Activated CD4-positive, alpha-beta T cell treated with anti-CD3 and anti-CD28 coated beads for 36 hours (primary cell): ENCODE measurements at regions of chr4 and their contacts with region 1.

Region 1: DNA sequence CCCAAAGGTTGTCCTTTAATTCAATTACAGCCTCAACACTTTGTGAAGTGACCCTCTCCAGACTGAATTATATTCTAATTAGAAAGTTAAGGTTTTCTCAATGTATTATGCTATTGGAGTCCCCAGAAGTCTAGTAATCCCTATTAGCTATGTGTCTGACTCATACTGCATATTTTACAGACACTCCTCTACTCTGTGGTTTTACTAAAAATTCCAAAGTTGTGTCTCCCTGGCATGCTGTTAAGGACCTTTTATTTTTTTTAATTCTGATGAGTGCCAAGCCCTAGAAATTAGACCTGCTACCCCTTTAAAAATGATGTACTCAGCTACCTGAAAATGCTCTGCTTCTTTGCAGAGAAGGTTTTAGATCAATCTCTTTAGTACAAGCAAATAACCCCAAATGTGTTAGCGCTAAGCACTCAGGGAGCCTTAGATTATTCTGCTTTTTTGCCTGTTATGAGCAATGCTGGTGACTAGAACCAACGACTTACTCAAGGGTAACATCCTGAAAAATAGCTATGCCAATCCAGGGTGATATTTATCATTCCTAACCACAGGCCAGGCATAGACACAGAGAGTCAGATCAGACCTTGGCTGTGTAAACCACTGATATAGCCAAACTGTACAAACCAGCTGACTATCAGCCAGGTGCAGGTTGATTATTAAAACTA is 26.1 kb upstream of the CXCL13 start:
- DNase-seq: no peak
- ATAC-seq: peak; percentile 63
- H3K4me3 Mint-ChIP-seq: no peak overlapping the region
- H3K27ac Mint-ChIP-seq: peak overlapping the region; percentile 70
- H3K4me1 Mint-ChIP-seq: peaks cover 39% of the 10 kb centered on the region
- H3K27me3 Mint-ChIP-seq: peaks cover 17% of the 10 kb centered on the region

Region 2: GRCh38 chr4:77538560-77539157 is 40.9 kb before region 1 on chr4:
- CTCF ChIA-PET with region 1: no interaction called
- POLR2A ChIA-PET with region 1: no interaction called
- intact Hi-C with region 1: loop called in 1 of 2 experiments (anchors 1 kb)
- DNase-seq: peak; percentile 26
- ATAC-seq: peak; percentile 59
- H3K4me3 Mint-ChIP-seq: no peak overlapping the region
- H3K27ac Mint-ChIP-seq: peak overlapping the region; percentile 27
- H3K4me1 Mint-ChIP-seq: peaks cover 19% of the 10 kb centered on the region
- H3K27me3 Mint-ChIP-seq: peaks cover 45% of the 10 kb centered on the region

Region 3: DNA sequence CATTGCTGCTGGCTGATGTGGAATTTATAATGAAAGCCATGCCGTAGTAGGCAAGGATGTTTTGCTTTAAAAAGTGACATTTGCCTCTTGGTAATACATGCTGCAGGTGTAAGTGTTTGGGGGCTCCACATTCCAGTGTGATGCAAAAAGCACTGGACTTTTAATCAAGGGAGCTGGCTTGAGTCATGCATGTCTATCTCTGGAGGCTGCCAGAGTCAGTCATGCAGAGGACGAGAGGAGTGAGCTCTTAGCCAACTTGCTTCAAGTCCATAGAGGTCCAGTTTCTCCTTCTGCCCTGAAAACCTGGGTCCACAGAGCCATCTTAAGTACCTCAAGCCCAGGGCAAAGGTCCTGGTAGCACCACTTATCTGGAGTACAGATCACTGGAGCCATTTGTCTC is 14.5 kb after region 1 on chr4:
- CTCF ChIA-PET with region 1: interaction called, 22 read pairs
- POLR2A ChIA-PET with region 1: interaction called, 3 read pairs
- intact Hi-C with region 1: loop called (anchors 2 kb)
- DNase-seq: no peak
- ATAC-seq: no peak
- H3K4me3 Mint-ChIP-seq: no peak overlapping the region
- H3K27ac Mint-ChIP-seq: peak overlapping the region; percentile 92
- H3K4me1 Mint-ChIP-seq: peaks cover 59% of the 10 kb centered on the region
- H3K27me3 Mint-ChIP-seq: peaks cover 9% of the 10 kb centered on the region

Region 4: GRCh38 chr4:77790146-77790545 is 210.6 kb after region 1 on chr4:
- CTCF ChIA-PET with region 1: no interaction called
- POLR2A ChIA-PET with region 1: no interaction called
- intact Hi-C with region 1: no loop called
- DNase-seq: no peak
- ATAC-seq: no peak
- H3K4me3 Mint-ChIP-seq: no peak overlapping the region
- H3K27ac Mint-ChIP-seq: peak overlapping the region; percentile 24
- H3K4me1 Mint-ChIP-seq: peaks cover 62% of the 10 kb centered on the region
- H3K27me3 Mint-ChIP-seq: no peaks in the 10 kb centered on the region